Sciatic nerve (tissue), 2 donors: ENCODE measurements at regions of chr12 and their contacts with region 1.

Region 1: DNA sequence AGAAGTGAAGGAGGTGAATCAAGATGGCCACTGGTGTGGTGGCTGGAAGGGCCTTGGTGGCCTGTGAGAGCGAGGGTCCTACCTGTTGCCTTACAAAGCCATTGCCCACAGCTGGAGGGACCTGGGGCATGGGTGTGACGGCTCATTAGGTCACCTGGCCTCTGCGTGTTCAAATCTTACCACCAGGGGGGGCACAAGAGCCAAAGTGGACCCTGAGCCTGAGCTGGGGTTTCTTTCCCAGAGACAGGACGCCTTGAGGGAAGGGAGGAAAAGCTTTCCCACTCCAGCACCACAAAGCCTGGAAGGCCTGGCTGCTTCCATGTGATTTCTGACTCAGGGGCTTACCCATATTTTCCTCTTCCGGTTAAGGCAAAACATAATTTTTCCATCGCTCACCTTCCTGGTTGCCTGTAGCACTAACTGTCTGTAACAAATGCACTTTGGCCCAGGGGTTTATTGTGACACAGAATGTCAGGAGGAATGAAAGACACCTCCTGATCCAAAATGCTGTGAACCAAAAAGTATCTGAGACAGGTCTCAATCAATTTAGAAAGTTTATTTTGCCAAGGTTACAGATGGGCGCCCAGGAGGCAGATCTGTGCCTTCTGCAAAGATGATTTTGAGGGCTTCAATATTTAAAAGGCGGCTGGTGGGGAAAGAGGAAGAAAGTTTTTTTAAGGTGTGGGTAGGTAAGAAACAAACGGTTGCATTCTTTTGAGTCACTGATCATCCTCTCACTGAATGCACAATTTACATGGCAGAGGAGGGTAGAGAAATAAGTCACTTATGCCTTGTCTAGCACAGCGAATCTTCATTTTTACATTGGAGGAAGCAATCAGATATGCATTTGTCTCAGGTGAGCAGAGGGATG is 4.3 kb upstream of the CD9 start:
- DNase-seq: peak; percentile 93
- ATAC-seq: peak; percentile 83

Region 2: GRCh38 chr12:6124411-6125309 is 71.2 kb before region 1 on chr12 and contains the start of gene VWF:
- intact Hi-C with region 1: no loop called
- DNase-seq: peak; percentile 33
- ATAC-seq: peak; percentile 28
- total RNA-seq, gene VWF: 655 TPM

Region 3: GRCh38 chr12:6278439-6279255 is 82.7 kb after region 1 on chr12:
- intact Hi-C with region 1: loop called (anchors 5 kb)
- DNase-seq: peak; percentile 89
- ATAC-seq: peak; percentile 92

Region 4: DNA sequence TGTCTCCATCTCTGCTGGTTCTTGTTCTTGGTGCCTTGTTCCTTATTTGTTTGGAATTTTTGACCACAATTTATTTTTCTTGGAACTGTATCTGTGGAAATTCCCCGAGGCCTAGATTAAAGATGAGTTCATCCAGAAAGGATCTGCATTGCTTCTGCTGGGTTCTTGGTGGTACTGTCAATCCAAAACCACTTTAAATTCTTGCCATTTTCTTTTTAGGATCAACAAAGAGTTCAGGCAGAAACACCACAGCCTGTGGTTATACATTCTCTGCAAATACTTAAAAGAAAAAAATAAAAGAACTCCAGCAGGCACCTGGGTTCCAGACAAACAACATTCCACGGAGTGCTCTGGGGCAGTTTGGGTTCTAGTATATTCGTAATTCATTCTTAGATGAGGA is 280.6 kb after region 1 on chr12:
- intact Hi-C with region 1: no loop called
- DNase-seq: no peak
- ATAC-seq: peak; percentile 69